Calu3 (cell line): ENCODE measurements at regions of chr16 and their contacts with region 1.

Region 1: GRCh38 chr16:24645739-24646645 is 83.5 kb upstream of the TNRC6A start:
- DNase-seq: peak; percentile 82
- H3K4me3 Mint-ChIP-seq: no peak overlapping the region
- H3K27ac Mint-ChIP-seq: peak overlapping the region; percentile 80
- H3K4me1 Mint-ChIP-seq: no peaks in the 10 kb centered on the region
- H3K27me3 Mint-ChIP-seq: no peaks in the 10 kb centered on the region
- CTCF ChIP-seq: no peak

Region 2: DNA sequence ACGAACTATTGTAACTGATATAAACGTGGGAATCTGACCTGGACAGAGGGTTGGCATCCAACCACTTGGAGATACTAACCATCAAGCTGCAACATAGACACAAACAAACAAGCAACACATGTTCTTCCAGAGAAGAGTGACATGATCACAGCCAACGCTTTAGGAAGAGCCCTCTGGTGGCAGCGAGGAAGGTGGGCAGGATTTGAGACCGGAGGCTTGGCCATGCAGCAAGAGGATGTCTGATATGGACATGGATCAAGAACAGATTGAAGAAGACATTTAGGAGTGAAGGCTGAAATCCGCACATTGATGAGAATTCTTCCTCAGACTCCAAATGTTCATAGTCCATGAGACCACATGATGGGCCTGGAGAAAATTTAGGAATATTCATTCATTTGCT is 43.2 kb after region 1 on chr16:
- CTCF ChIA-PET with region 1: no interaction called
- intact Hi-C with region 1: no loop called
- DNase-seq: peak; percentile 48
- H3K4me3 Mint-ChIP-seq: no peak overlapping the region
- H3K27ac Mint-ChIP-seq: no peak overlapping the region
- H3K4me1 Mint-ChIP-seq: peaks cover 10% of the 10 kb centered on the region
- H3K27me3 Mint-ChIP-seq: no peaks in the 10 kb centered on the region
- CTCF ChIP-seq: peak; percentile 67

Region 3: DNA sequence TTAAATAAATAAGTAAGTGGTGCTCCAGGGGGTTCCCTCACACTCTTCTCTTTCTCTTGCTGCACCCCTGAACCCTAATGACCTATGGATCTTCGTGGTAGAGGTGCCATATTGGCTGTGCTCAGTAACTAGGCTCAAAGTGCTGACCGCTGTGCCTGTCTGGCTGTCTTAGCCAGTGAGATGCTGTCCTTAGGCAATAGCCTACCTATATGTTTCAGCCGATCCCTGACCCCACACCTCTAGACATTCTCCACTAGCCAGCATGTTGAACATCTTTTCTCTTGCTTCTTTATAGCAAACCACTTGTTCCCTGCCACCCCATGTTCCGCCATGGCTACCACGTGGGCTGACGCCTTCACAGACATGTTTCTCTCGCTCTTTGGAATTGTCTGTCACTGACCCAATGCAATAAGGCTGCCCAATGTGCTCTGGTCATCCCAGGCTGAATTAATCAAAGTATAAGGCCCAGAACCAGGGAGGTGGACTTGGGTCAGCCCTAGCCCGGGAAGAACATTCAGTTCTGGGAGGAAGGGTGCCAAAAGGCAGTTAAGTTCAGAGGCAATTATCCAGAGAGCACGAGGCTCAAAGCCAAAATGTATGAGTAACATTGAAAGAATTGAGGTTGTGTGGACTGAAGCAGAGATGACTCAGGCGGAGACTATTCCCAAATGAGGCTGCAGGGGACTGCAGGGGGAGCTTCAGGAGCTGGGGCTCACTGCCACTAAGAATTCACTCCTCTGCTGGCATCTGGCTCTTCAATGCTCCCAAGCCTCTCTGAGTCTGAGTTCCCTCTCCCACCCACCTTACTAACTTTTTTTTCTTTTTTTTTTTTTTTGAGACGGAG is 54.8 kb after region 1 on chr16:
- CTCF ChIA-PET with region 1: no interaction called
- intact Hi-C with region 1: loop called (anchors 1 kb)
- DNase-seq: peak; percentile 77
- H3K4me3 Mint-ChIP-seq: no peak overlapping the region
- H3K27ac Mint-ChIP-seq: peak overlapping the region; percentile 25
- H3K4me1 Mint-ChIP-seq: peaks cover 33% of the 10 kb centered on the region
- H3K27me3 Mint-ChIP-seq: no peaks in the 10 kb centered on the region
- CTCF ChIP-seq: no peak

Region 4: GRCh38 chr16:24972608-24973220 is 326.7 kb after region 1 on chr16:
- CTCF ChIA-PET with region 1: no interaction called
- intact Hi-C with region 1: no loop called
- DNase-seq: no peak
- H3K4me3 Mint-ChIP-seq: no peak overlapping the region
- H3K27ac Mint-ChIP-seq: no peak overlapping the region
- H3K4me1 Mint-ChIP-seq: peaks cover 18% of the 10 kb centered on the region
- H3K27me3 Mint-ChIP-seq: no peaks in the 10 kb centered on the region
- CTCF ChIP-seq: no peak

Region 5: GRCh38 chr16:25093208-25094061 is 447.4 kb after region 1 on chr16:
- CTCF ChIA-PET with region 1: no interaction called
- intact Hi-C with region 1: no loop called
- DNase-seq: no peak
- H3K4me3 Mint-ChIP-seq: no peak overlapping the region
- H3K27ac Mint-ChIP-seq: no peak overlapping the region
- H3K4me1 Mint-ChIP-seq: no peaks in the 10 kb centered on the region
- H3K27me3 Mint-ChIP-seq: peaks cover 17% of the 10 kb centered on the region
- CTCF ChIP-seq: no peak